ENCODE measurements at regions of chr15 and their contacts with region 1.

Region 1: DNA sequence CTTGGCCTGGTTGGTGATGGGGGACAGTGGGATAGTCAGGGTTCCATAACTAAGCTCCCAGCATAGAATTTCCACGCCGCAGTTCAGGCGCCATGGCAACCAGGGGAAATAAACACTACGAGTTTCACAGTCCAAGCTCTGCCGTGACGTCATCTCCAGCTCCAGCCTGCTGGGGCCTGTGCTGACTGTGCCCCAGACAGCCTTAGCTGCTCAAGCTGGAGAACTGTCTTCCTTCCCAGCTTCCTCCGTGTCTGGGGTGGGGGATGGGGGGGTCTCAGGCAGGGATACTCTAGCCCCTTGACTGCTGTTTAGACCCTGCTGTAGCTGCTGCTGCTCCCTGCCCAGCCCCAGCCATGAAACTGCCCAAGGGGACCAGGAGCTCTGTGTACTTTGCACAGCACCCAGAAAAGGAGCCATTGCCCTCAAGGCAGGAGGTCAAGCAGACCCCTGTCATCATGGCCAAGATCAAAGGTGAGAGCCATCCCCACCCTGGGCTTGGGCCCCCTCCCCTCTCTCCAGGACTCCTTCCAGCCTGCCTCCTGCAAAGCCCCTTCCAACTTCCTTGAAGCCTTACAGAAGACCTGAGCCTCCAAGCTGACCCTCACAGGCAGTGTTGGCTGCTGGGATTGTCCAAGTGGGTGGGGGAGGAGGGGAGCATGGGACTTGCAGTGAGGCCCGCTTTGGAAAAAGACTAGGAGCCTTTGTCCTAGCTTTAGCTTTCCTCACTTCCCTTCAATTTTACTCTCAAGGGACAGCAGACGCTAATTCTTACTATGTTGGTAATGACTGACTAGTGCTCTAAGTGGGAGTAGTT is 11.4 kb upstream of the CSPG4 start:
- DNase-seq: peak; percentile 73
- H3K4me3 Mint-ChIP-seq: no peak overlapping the region
- H3K27ac Mint-ChIP-seq: no peak overlapping the region
- H3K4me1 Mint-ChIP-seq: peaks cover 8% of the 10 kb centered on the region
- H3K27me3 Mint-ChIP-seq: peaks cover 9% of the 10 kb centered on the region

Region 2: GRCh38 chr15:75903331-75904239 is 179.5 kb after region 1 on chr15 and contains the start of gene FBXO22:
- CTCF ChIA-PET with region 1: no interaction called
- POLR2A ChIA-PET with region 1: no interaction called
- intact Hi-C with region 1: loop called (anchors 10 kb)
- DNase-seq: peak; percentile 95
- H3K4me3 Mint-ChIP-seq: peak within 1 kb of the TSS; percentile 100
- H3K27ac Mint-ChIP-seq: peak within 1 kb of the TSS; percentile 96
- H3K4me1 Mint-ChIP-seq: peaks cover 39% of the 10 kb centered on the region
- H3K27me3 Mint-ChIP-seq: no peaks in the 10 kb centered on the region
- total RNA-seq, gene FBXO22: 66.7 to 67.4 TPM